GM12878 (cell line): ENCODE measurements at regions of chr6 and their contacts with region 1.

Region 1: GRCh38 chr6:115665310-115665709 is 395.4 kb downstream of the FRK start:
- DNase-seq: no peak
- ATAC-seq: no peak
- H3K4me3 ChIP-seq: no peak overlapping the region
- H3K27ac ChIP-seq: no peak overlapping the region
- H3K4me1 ChIP-seq: no peaks in the 10 kb centered on the region
- H3K27me3 ChIP-seq: no peaks in the 10 kb centered on the region; a peak in 1 of 4 replicates
- CTCF ChIP-seq: no peak
- EP300 ChIP-seq: no peak
- POLR2A ChIP-seq: no peak
- RAD21 ChIP-seq: no peak

Region 2: DNA sequence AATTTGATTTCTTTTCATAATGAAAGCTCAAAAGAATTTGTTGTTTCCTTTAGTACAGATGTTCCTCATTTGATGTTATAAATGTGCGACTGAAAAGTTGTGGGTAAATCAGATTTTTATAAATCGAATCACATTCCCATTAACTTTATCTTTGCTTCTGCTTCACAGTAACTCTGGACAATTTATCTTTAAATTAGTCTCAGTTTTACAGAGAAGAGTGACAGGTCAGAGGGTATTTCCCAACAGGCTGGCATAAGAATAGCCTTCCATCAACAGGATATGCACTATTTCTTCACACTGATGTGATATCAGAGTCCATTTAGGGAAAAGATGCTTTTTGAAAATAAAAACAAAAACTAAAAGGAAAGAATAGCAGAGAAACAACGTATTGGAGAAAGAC is 108.4 kb after region 1 on chr6:
- CTCF ChIA-PET with region 1: no interaction called
- POLR2A ChIA-PET with region 1: no interaction called
- RAD21 ChIA-PET with region 1: no interaction called
- SMC1A ChIA-PET with region 1: no interaction called
- in situ Hi-C with region 1: no loop called
- intact Hi-C with region 1: loop called (anchors 2 kb)
- DNase-seq: no peak
- ATAC-seq: no peak
- H3K4me3 ChIP-seq: no peak overlapping the region
- H3K27ac ChIP-seq: no peak overlapping the region
- H3K4me1 ChIP-seq: no peaks in the 10 kb centered on the region
- H3K27me3 ChIP-seq: no peaks in the 10 kb centered on the region
- CTCF ChIP-seq: no peak
- EP300 ChIP-seq: no peak
- POLR2A ChIP-seq: no peak
- RAD21 ChIP-seq: no peak